Heart right ventricle (tissue), 16 donors: ENCODE measurements at regions of chr10 and their contacts with region 1.

Region 1: DNA sequence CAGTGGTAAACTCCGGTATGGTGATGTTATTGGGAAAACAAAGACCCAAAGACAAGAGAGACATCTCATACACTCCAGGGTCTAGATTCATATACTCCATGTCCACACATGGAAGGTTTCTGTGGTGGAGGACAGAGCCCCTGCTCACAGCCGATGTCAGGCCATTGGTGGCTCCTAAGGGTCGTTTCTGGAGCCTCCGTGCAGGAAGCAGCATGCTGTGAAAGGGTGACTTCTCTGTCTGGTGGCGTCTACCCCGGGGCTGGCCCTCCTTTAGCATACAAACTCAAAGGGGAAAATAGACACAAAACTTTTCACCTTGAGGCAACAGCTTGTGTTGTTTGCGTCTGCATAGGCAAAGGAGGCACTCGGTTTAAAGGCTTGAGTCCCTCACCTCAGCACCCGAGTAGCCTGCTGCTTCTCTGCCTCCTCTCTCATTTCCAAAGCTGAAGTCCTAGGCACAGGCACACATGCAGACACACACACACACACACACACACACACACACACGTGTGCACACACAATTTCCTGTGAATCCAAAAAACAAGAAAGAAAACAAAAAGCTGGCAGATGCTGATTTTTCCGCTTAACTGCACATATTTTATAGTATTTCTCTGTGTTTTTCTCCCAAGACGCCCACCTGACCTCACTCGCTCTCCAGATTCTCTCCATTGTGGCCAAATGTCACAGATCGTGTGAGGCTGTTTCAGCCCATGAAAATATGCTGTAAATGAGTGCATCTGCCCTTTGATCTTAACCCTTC is 601.4 kb upstream of the MGMT start:
- DNase-seq: no peak
- ATAC-seq: no peak
- H3K4me3 ChIP-seq: no peak overlapping the region
- H3K27ac ChIP-seq: no peak overlapping the region
- H3K4me1 ChIP-seq: peaks cover 0 to 11% (median 5%) of the 10 kb centered on the region in 9 donors
- H3K27me3 ChIP-seq: no peaks in the 10 kb centered on the region
- CTCF ChIP-seq: no peak

Region 2: DNA sequence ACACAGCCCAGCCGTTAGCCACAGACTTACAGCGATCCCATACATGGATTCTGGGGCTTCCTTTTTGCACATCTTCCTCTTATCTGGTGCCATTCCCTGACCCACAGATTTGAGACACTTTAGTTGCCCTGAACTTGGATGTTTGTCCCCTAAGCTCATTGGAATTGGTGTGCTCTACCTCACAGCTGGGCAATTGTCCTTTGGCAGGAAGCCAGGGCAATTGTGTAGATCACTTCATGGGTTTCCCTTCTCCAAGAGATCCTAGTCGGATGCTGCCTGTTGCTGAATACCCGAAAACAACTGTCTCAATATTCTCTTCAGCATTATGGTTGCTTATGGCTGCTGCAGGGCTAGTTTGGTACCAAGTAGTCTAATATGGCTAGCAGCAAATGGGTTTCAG is 268.7 kb before region 1 on chr10:
- intact Hi-C with region 1: no loop called
- DNase-seq: no peak
- ATAC-seq: no peak
- H3K4me3 ChIP-seq: no peak overlapping the region
- H3K27ac ChIP-seq: no peak overlapping the region
- H3K4me1 ChIP-seq: no peaks in the 10 kb centered on the region
- H3K27me3 ChIP-seq: no peaks in the 10 kb centered on the region
- CTCF ChIP-seq: no peak

Region 3: GRCh38 chr10:128846927-128847326 is 18.7 kb before region 1 on chr10:
- intact Hi-C with region 1: loop called in 1 of 10 experiments (anchors 1 kb)
- DNase-seq: no peak
- ATAC-seq: no peak
- H3K4me3 ChIP-seq: no peak overlapping the region
- H3K27ac ChIP-seq: no peak overlapping the region
- H3K4me1 ChIP-seq: peaks cover 0 to 33% (median 11%) of the 10 kb centered on the region in 9 donors
- H3K27me3 ChIP-seq: no peaks in the 10 kb centered on the region
- CTCF ChIP-seq: no peak

Region 4: DNA sequence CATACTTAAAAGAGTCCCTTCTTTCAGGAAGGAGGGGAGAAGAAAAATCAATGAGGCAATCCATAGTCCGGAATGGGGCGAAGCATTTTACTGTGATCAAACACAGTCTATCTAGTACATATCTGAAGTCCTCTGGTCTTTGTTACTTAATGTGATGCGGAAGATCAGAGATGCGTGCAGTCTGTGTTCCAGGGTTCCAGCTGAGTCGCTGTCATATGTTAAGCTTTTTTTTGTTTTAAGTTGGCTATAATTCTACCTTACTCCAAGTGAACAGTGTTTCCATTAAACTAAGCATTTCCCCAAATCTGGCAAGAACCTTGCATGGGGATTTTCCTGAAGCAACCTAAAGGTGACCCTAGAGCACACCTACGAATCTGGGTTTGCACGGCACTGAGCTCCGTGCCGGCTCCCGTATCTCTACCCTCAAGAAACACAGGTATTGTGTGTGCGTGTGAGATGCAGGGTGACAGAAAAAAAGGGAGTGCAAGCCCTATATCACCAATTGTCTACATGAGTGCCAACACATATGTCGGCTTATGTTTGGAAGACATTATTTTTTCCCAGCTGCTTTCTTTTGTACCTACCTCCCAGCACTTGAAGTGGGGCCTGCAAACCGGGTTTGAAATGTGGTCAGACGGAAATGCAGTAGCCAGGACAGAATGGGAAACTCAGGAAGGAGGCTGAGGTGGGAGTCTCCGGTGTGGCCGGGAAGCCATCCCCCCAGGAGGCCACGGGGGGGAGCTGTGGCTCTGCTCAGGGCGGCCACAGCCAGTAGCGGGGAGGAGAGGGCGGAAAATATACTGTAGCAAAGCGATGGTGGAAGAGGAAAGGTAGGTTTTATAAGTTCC is 165.6 kb after region 1 on chr10:
- intact Hi-C with region 1: no loop called
- DNase-seq: peak; percentile 45 to 68
- ATAC-seq: peak; percentile 72 to 93 (median 92)
- H3K4me3 ChIP-seq: no peak overlapping the region
- H3K27ac ChIP-seq: no peak overlapping the region
- H3K4me1 ChIP-seq: peaks cover 0 to 20% (median 3%) of the 10 kb centered on the region in 9 donors
- H3K27me3 ChIP-seq: peaks cover 0 to 70% (median 22%) of the 10 kb centered on the region in 7 donors
- CTCF ChIP-seq: peak; percentile 82 to 97 (median 93)